Activated B cell treated with CpG ODN at 0.5 μM for 24 hours (primary cell): ENCODE measurements at regions of chr3 and their contacts with region 1.

Region 1: GRCh38 chr3:15319575-15319974 is 12.8 kb downstream of the SH3BP5 start:
- DNase-seq: no peak
- ATAC-seq: no peak
- H3K4me3 Mint-ChIP-seq: no peak overlapping the region
- H3K27ac Mint-ChIP-seq: peak overlapping the region; percentile 65
- H3K4me1 Mint-ChIP-seq: peaks cover 92% of the 10 kb centered on the region
- H3K27me3 Mint-ChIP-seq: no peaks in the 10 kb centered on the region
- CTCF ChIP-seq: no peak

Region 2: DNA sequence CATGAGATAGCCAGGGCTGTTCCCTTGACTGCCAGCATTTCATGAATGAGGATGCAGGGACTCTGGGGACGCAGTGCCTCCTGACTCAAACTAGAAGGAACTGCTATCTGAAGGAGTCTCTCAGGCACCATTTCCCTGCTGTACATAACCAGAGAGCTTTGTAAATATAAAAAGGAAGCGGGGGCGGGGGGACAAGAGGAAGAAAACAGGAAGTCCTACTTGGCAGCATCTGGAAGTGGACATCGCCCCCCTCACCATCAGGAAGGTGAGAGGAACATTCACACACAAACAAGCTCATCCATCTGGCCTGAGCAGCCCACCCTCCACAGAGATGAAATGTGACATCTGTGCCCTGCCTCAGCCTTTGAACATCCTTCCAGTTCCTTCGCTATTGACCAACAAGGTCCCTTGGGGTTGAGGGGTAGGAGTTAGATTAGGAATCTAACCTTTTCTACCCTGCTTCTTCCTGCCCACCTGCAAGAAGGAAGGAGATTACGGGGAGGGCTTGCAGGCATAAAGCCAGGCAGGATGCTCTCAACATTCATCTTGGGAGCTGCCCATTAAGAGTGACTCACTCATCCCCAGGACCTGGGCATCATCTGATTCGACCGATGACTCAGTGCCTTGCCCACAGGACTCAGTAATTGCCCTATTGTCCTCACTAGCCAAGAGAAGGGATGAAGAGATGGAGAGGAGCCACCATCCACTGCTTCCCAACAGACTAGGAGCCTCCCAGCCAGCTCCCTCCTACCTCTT is 19.1 kb before region 1 on chr3:
- CTCF ChIA-PET with region 1: interaction called, 5 read pairs
- POLR2A ChIA-PET with region 1: interaction called, 4 read pairs
- intact Hi-C with region 1: loop called (anchors 2 kb)
- DNase-seq: no peak
- ATAC-seq: no peak
- H3K4me3 Mint-ChIP-seq: no peak overlapping the region
- H3K27ac Mint-ChIP-seq: peak overlapping the region; percentile 72
- H3K4me1 Mint-ChIP-seq: peaks cover 86% of the 10 kb centered on the region
- H3K27me3 Mint-ChIP-seq: no peaks in the 10 kb centered on the region
- CTCF ChIP-seq: no peak